ENCODE measurements at regions of chr6 and their contacts with region 1.

Region 1: GRCh38 chr6:41683510-41684310 is 45.4 kb downstream of the MDFI start:
- DNase-seq: peak; percentile 79 to 87 (median 83)
- ATAC-seq: peak; percentile 83
- H3K4me3 ChIP-seq: no peak overlapping the region
- H3K4me1 ChIP-seq: peaks cover 16% of the 10 kb centered on the region
- CTCF ChIP-seq: peak; percentile 80

Region 2: GRCh38 chr6:41367700-41368099 is 316.0 kb before region 1 on chr6:
- intact Hi-C with region 1: loop called (anchors 2 to 5 kb)
- DNase-seq: peak in 2 of 3 donors; percentile 55 to 64
- ATAC-seq: peak; percentile 56
- H3K4me3 ChIP-seq: no peak overlapping the region
- H3K4me1 ChIP-seq: peaks cover 18% of the 10 kb centered on the region
- CTCF ChIP-seq: peak; percentile 18

Region 3: GRCh38 chr6:41602864-41603608 is 80.7 kb before region 1 on chr6:
- intact Hi-C with region 1: loop called (anchors 2 to 5 kb)
- DNase-seq: peak; percentile 74 to 84 (median 82)
- ATAC-seq: peak; percentile 88
- H3K4me3 ChIP-seq: no peak overlapping the region
- H3K4me1 ChIP-seq: peaks cover 15% of the 10 kb centered on the region
- CTCF ChIP-seq: peak; percentile 76

Region 4: DNA sequence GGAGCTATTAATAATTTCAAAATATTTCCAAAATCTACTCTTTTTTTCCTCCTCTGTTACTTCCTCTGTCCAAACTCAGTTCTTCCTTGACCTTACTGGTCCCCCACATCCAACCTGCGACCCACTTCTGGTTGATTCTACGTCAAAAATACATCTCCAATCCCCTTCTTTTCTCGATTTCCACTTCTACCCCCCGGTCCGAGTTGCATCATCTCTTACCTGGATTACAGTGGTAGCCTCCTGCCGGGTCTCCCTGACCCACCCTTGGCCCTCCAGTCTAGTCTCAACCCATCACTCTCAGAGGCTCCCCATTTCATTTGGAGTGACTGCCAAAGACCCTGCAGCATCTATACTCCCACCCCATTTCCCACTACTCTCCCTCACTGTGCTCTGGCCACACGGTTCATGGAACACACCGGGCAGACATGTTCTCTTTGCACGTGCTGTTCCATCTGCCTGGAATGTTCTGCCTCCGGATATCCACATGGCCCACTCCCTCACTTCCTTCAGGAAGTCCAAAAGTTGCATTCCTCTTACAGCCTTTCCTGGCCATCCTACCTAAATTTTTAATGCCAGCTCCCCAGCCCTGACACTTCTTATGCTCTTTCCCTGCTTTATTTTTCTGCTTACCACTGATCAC is 264.0 kb after region 1 on chr6:
- intact Hi-C with region 1: no loop called
- DNase-seq: no peak
- ATAC-seq: no peak
- H3K4me3 ChIP-seq: no peak overlapping the region
- H3K4me1 ChIP-seq: no peaks in the 10 kb centered on the region
- CTCF ChIP-seq: no peak

Measured in mucosa of descending colon (tissue), 3 donors.